Left ventricle myocardium superior (tissue), 1 donor: ENCODE measurements at regions of chr11 and their contacts with region 1.

Region 1: DNA sequence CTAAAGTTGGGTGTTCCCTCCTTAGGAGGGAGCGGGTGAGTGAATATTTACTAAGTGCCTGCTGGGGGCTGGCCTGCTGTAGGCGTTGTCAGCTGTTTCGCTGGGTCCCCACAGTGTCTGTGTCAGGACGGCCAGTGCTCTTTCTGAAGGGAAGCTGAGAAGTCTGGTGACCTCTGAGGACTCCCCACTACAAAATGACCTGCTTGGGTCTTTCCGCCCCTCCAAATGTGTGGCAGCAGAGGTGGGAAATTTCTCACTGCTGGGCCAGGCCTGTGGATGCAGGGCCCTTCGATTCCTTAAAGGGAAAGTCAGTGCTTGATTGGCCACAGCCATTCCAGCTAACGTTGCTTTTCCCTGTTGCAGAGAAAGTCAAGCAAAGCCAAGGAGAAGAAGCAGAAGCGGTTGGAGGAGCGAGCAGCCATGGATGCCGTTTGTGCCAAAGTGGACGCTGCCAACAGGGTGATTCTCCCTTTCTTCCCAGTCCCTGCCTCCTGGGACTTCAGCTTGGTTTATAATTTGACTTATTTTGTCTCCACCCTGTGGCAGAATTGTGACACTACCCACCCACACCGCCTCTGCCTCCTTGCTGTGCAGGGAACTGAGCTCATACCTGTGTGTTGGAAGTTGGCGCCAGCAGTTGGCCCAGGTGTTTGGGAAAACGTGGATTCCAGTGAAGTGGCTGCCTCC is 6.8 kb downstream of the NAA40 start:
- DNase-seq: peak; percentile 63
- ATAC-seq: peak; percentile 90

Region 2: GRCh38 chr11:63839508-63840355 is 105.9 kb before region 1 on chr11:
- intact Hi-C with region 1: loop called (anchors 2 kb)
- DNase-seq: peak; percentile 37
- ATAC-seq: no peak